HEK293T (cell line): ENCODE measurements at regions of chr14 and their contacts with region 1.

Region 1: GRCh38 chr14:34875031-34875922 is at the start of gene BAZ1A:
- DNase-seq: peak; percentile 68

Region 2: GRCh38 chr14:34252227-34252626 is 623.0 kb before region 1 on chr14:
- CTCF ChIA-PET with region 1: no interaction called
- POLR2A ChIA-PET with region 1: no interaction called
- DNase-seq: no peak

Region 3: DNA sequence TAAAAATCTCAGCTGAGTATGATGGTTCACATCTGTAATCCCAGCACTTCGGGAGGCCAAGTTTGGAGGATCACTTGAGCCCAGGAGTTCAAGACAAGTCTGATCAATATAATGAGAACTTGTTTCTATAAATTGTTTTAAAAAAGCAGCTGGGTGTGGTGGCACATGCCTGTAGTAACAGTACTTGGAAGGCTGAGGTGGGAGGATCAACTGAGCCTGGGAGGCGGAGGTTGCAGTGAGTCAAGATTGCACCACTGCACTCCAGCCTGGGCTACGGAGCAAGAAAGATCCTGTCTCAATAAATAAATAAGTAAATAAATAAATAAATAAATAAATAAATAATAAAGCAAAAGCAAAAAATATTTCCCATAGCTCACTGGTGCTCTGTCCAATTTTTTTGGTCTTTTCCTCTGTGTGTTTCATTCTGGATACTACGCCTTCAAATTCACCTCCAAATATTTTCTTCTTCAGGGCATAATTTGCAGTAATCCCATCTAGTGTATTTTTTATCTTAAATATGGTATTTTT is 212.7 kb before region 1 on chr14:
- CTCF ChIA-PET with region 1: no interaction called
- POLR2A ChIA-PET with region 1: no interaction called
- DNase-seq: no peak

Region 4: DNA sequence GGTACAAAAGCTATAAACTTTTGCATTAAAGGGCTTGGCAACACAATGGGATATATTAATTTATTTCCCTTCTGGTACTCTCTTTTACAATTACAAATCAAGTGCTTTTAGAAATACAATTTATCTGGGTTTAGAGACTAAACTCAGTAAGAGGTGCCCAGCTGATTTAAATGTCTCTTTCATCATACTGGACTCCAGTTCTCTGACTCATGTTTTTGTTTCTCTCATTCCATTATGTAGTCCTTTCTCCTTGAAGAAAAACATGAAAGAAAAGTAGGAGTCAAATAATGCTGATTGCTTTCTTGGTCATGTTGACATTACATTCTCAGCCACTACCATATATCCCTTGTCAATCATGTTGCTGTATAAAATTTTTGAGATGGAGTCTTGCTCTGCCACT is 124.6 kb before region 1 on chr14:
- CTCF ChIA-PET with region 1: no interaction called
- POLR2A ChIA-PET with region 1: no interaction called
- DNase-seq: no peak

Region 5: GRCh38 chr14:34857689-34858449 is 17.4 kb before region 1 on chr14:
- CTCF ChIA-PET with region 1: no interaction called
- POLR2A ChIA-PET with region 1: interaction called, 10 read pairs
- DNase-seq: no peak